Naive thymus-derived CD4-positive, alpha-beta T cell (primary cell): ENCODE measurements at regions of chr21 and their contacts with region 1.

Region 1: GRCh38 chr21:44873356-44874239 is at the start of gene PTTG1IP:
- DNase-seq: peak; percentile 97 to 100 (median 99)
- ATAC-seq: peak; percentile 88
- H3K4me3 ChIP-seq: peak within 1 kb of the TSS; percentile 71
- H3K4me3 Mint-ChIP-seq: peak within 1 kb of the TSS; percentile 90 to 97 (median 96)
- H3K27ac ChIP-seq: peak within 1 kb of the TSS; percentile 81
- H3K27ac Mint-ChIP-seq: peak within 1 kb of the TSS; percentile 84 to 97 (median 92)
- H3K4me1 ChIP-seq: peaks cover 34 to 46% of the 10 kb centered on the region in 2 donors
- H3K4me1 Mint-ChIP-seq: peaks cover 31 to 56% (median 48%) of the 10 kb centered on the region in 7 donors
- H3K27me3 ChIP-seq: no peaks in the 10 kb centered on the region
- H3K27me3 Mint-ChIP-seq: no peaks in the 10 kb centered on the region
- total RNA-seq, gene PTTG1IP: 83.8 to 122 (median 95.6) TPM

Region 2: DNA sequence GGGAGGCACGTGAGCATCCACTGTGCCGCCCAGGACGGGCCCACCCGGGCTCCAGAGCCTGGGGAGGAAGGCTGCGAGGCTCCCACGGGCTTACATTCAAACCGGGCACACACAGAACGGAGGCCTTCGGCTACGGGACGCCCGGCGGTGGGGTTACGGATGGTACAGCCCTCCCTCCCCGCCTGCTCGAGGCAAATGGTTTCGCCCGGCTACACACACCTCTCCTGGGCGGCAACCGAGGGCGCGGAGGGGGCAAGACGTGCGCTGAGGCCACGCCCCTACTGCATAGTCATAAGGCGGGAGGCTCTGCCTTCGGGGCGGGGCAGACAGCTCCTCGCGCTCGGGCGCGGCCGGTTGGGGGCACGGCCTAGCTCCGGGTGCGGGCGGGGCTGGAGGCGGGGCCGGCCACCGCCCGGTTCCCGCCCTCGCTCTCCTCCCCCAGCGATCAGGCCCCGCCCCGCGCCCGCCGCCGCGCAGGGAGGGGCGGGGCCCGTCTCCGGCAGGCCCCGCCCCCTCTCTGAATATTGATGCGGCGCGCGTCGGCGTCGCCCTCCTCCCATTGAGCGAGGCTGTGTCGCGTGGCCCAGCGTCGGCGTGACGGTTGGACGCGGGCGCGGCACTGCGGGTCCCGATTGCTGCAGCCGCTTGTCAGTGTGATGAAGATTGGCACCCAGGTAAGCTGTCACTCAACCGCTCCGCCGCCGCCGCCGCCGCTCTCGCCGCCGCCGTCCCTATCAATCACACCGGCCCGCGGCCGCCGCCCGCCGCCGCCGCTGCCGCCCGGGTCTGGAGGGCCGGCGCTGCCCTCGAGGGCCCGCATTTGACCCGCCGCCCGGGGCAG is 1899.4 kb before region 1 on chr21 and contains the start of gene PKNOX1:
- CTCF ChIA-PET with region 1: no interaction called
- POLR2A ChIA-PET with region 1: no interaction called
- intact Hi-C with region 1: loop called in 1 of 2 experiments (anchors 10 kb)
- DNase-seq: peak; percentile 98 to 100 (median 99)
- ATAC-seq: peak; percentile 91
- H3K4me3 ChIP-seq: peak within 1 kb of the TSS; percentile 85
- H3K4me3 Mint-ChIP-seq: peak within 1 kb of the TSS; percentile 78 to 93 (median 88)
- H3K27ac ChIP-seq: peak within 1 kb of the TSS; percentile 94
- H3K27ac Mint-ChIP-seq: peak within 1 kb of the TSS; percentile 78 to 95 (median 93)
- H3K4me1 ChIP-seq: peaks cover 7 to 11% of the 10 kb centered on the region in 2 donors
- H3K4me1 Mint-ChIP-seq: peaks cover 0 to 36% (median 29%) of the 10 kb centered on the region in 7 donors
- H3K27me3 ChIP-seq: no peaks in the 10 kb centered on the region
- H3K27me3 Mint-ChIP-seq: no peaks in the 10 kb centered on the region
- total RNA-seq, gene PKNOX1: 14.7 to 24.7 (median 20.8) TPM

Region 3: DNA sequence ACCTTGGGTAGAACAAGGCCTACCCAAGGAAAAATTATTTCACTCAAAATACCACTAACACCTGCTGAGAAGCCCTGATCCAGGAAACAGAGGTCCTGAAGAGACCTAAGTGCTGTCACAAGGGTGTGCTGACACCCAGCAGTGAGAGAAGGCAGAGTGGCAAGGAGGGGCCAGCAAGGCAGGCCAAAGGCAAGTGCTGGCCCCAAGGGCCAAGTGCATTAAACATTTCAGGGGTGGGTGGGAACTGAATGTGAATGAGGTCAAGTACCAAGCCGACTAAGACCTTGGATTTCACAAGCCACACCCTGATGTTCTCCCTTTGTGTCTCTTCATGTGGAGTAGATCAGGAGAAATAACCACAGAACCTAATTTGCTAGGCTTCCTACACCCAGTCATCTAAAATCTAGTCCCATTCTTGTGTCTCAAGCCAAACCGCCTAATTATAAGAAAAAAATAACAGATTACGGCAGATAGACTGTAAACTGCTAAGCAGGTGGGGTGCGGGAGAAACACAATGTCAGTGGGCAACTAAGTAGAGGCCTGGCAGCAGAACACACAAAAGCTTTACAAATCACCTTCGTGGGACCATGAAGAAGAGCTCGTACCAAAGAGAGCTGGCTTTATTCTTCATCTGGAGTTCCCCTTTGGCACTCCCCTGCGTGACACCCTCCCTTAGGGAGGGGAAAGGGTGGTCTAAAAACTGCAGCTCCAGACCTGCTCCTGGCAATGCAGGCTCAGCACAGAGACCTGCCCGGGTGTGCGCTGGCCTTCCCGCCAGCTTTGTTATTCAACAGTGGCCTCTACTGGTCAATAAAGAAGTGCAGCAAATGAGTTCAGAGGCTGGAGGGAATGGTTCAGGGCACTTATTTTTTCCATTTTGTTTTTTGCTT is 80.7 kb before region 1 on chr21:
- CTCF ChIA-PET with region 1: interaction called, 3 read pairs
- POLR2A ChIA-PET with region 1: no interaction called
- intact Hi-C with region 1: loop called in 1 of 2 experiments (anchors 2 kb)
- DNase-seq: peak in 8 of 9 donors; percentile 37 to 73 (median 62)
- ATAC-seq: peak; percentile 96
- H3K4me3 ChIP-seq: no peak overlapping the region
- H3K4me3 Mint-ChIP-seq: no peak overlapping the region
- H3K27ac ChIP-seq: no peak overlapping the region
- H3K27ac Mint-ChIP-seq: peak overlapping the region; percentile 2 to 83 (median 40)
- H3K4me1 ChIP-seq: peaks cover 7 to 10% of the 10 kb centered on the region in 2 donors
- H3K4me1 Mint-ChIP-seq: peaks cover 17 to 64% (median 53%) of the 10 kb centered on the region in 7 donors
- H3K27me3 ChIP-seq: no peaks in the 10 kb centered on the region
- H3K27me3 Mint-ChIP-seq: no peaks in the 10 kb centered on the region

Region 4: DNA sequence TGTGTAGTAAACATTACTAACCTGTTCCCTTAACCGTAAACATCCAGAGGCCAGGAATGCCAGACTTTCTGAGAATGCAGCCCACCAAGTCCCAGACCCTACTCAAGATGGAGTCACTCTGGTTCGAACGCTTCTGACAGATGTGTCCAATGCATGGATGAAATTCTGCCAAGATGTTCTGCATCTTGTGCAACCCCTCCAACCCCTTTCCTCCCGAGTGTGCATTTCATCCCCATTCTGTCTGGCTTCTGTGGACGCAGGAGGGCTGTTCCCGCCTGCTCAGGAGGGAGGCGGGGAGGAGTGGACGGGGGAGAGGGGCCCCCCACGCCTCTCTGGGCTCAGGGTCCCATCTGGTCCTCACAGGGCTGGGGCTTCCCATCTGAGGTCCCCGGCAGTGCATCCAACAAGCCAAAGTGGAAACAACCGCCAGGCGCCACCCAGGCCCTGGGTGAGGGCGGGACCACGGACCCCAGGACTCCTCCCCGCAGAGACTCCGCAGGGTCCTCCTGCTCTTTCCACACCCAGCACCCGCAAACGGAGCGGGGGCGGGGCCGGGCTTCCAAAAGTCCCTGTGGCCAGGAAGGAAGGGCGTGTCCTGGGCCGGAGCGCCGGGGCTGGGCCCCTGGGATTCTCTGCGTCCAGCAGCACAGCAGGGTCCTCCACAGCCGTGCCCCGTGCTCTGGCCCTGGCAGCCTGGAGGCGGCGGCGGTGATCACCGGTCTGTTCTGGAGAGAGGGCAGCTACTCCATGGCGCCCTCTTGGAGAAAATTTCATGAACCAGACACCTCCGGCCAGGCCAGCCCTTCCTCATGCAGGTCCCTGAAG is 28.0 kb before region 1 on chr21:
- CTCF ChIA-PET with region 1: interaction called, 3 read pairs
- POLR2A ChIA-PET with region 1: interaction called, 5 read pairs
- intact Hi-C with region 1: loop called (anchors 1 kb)
- DNase-seq: peak; percentile 15 to 75 (median 37)
- ATAC-seq: peak; percentile 77
- H3K4me3 ChIP-seq: peak overlapping the region; percentile 51
- H3K4me3 Mint-ChIP-seq: peak overlapping the region; percentile 65 to 80 (median 78)
- H3K27ac ChIP-seq: peak overlapping the region; percentile 58
- H3K27ac Mint-ChIP-seq: peak overlapping the region; percentile 57 to 90 (median 76)
- H3K4me1 ChIP-seq: peaks cover 6 to 11% of the 10 kb centered on the region in 2 donors
- H3K4me1 Mint-ChIP-seq: peaks cover 3 to 24% (median 13%) of the 10 kb centered on the region in 7 donors
- H3K27me3 ChIP-seq: no peaks in the 10 kb centered on the region
- H3K27me3 Mint-ChIP-seq: peaks cover 0 to 4% (median 0%) of the 10 kb centered on the region in 5 donors

Region 5: DNA sequence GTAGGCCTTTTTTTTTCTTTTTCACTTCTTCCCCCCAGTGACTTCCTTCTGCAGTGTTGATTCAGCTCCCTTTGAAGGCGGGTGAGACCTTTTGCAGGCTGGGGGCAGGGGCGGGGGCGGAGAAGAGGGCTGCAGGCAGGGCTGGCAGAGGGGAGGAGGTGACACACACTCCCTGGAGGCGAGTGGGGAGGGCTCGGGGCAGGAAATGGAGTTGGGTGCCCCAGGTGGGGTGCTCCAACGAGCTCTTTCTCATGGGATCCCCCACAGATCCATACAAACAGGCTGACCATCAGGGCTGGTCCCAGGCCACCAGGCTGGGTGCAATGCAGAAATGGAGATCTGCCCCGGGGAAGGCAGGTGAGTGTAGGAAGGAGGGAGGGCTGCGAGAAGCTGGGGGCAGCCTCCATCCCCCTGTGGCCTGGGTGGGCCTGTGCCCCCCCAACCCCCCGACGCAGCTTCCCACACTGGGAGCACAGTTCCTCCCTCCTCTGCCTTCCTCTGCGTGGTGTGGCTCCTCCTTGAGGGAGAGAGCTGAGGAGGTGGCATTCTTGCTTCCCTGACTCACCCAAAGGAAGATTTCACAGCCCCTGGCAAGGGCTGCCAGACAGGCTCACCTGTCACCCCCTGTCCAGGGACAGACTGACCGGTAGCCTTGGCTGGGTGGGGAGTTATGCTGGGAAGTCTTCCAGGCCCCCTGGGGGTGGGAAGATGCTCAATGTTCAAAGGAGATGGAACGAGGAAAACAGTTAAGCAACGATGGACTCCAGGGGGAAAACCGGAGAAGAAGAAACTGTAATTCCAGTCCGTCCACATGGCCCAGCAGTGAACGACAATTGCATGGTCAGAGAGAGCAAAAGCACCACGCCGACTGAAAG is 54.2 kb after region 1 on chr21:
- CTCF ChIA-PET with region 1: interaction called, 5 read pairs
- POLR2A ChIA-PET with region 1: interaction called, 52 read pairs
- intact Hi-C with region 1: loop called (anchors 1 to 5 kb)
- DNase-seq: peak; percentile 43 to 95 (median 85)
- ATAC-seq: peak; percentile 84
- H3K4me3 ChIP-seq: peak overlapping the region; percentile 100
- H3K4me3 Mint-ChIP-seq: peak overlapping the region; percentile 86 to 97 (median 93)
- H3K27ac ChIP-seq: peak overlapping the region; percentile 79
- H3K27ac Mint-ChIP-seq: peak overlapping the region; percentile 86 to 98 (median 95)
- H3K4me1 ChIP-seq: peaks cover 54 to 62% of the 10 kb centered on the region in 2 donors
- H3K4me1 Mint-ChIP-seq: peaks cover 65 to 82% (median 78%) of the 10 kb centered on the region in 7 donors
- H3K27me3 ChIP-seq: no peaks in the 10 kb centered on the region
- H3K27me3 Mint-ChIP-seq: no peaks in the 10 kb centered on the region

Region 6: DNA sequence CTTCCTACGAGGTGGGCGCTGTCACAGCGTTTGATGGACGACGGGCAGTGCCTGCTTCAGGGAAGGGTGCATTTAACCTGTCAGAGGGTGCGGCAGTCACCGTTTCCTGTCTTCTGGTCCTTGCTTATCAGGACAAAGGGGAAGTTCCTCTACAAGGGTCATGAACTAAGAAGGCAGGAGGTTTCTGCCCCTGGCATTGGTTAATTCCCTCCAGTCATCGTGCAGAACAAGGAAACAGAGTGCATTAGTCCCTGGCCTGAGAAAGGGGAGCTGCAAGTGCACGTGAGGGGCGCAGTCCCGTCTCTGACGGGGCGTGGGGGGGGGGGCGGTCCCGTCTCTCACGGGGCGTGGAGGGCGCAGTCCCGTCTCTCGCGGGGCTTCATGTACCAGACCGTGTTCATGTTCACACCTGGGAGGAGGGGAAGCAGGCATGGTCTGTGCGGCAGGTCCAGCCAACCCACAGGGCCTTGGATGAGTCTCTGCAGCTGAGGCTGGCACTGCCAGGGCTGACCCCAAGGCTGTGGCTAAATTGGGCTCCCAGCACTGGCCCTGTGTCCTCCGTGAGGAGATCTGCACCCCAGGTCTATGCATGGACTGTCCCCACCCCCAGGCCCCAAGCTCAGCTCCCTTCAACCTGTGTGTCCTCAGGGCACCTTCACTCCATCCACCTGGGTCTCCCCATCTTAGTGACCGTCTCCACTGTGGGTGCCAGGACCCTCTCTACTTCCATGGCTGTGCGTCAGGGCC is 1018.7 kb after region 1 on chr21:
- CTCF ChIA-PET with region 1: no interaction called
- POLR2A ChIA-PET with region 1: no interaction called
- intact Hi-C with region 1: loop called in 1 of 2 experiments (anchors 1 kb)
- DNase-seq: peak in 4 of 9 donors; percentile 18 to 40 (median 26)
- ATAC-seq: peak; percentile 81
- H3K4me3 ChIP-seq: no peak overlapping the region
- H3K4me3 Mint-ChIP-seq: peak overlapping the region; percentile 13 to 81 (median 74)
- H3K27ac ChIP-seq: no peak overlapping the region
- H3K27ac Mint-ChIP-seq: peak overlapping the region; percentile 3 to 89 (median 78)
- H3K4me1 ChIP-seq: peaks cover 26 to 57% of the 10 kb centered on the region in 2 donors
- H3K4me1 Mint-ChIP-seq: peaks cover 30 to 67% (median 66%) of the 10 kb centered on the region in 7 donors
- H3K27me3 ChIP-seq: no peaks in the 10 kb centered on the region
- H3K27me3 Mint-ChIP-seq: peaks cover 0 to 17% (median 0%) of the 10 kb centered on the region in 5 donors